ENCODE measurements at regions of chr1 and their contacts with region 1.

Region 1: GRCh38 chr1:114549137-114549536 is 32.3 kb downstream of the BCAS2 start:
- DNase-seq: peak in 2 of 3 donors; percentile 21 to 24
- H3K4me3 ChIP-seq: no peak overlapping the region
- H3K4me3 Mint-ChIP-seq: peak overlapping the region in 1 of 2 donors; percentile 49
- H3K27ac ChIP-seq: no peak overlapping the region
- H3K27ac Mint-ChIP-seq: peak overlapping the region; percentile 28 to 89 (median 75)
- H3K4me1 ChIP-seq: peaks cover 15 to 21% of the 10 kb centered on the region in 2 donors
- H3K4me1 Mint-ChIP-seq: peaks cover 15% of the 10 kb centered on the region
- H3K27me3 ChIP-seq: no peaks in the 10 kb centered on the region
- H3K27me3 Mint-ChIP-seq: peaks cover 0 to 7% (median 2%) of the 10 kb centered on the region in 3 donors
- CTCF ChIP-seq: no peak

Region 2: DNA sequence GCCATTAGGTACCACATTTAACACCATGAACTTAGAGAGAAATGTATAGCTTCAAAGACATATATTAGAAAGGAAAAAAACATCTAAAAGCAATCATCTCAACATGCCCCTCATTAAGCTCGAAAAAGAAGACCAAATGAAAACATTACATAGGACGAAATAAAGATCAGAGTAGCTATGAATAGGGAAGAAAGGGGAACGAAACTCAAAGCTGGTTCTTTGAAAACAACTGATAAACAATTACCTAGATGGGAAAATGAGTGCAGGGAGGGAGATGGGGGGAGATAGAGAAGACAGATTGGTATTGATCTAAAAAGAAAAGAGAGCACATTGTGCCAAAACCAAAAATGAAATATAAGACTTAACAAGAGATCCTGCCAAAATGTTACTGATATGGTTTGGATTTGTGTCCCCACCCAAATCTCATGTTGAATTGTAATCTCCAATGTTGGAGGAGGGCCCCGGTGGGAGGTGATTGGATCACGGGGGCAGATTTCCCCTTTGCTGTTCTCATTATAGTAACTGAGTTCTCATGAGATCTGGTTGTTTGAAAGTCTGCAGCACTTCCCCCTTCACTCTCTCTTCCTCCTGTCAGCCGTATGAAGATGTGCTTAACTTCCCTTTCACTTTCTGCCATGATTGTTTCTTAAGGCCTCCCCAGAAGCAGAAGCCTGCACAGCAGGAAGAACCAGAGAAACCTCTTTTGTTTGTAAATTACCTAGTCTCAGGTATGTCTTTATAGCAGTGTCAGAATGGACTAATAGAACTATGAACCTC is 66.7 kb before region 1 on chr1:
- intact Hi-C with region 1: loop called in 1 of 2 experiments (anchors 10 kb)
- DNase-seq: peak; percentile 69 to 74 (median 70)
- H3K4me3 ChIP-seq: peak overlapping the region in 2 of 3 experiments; percentile 5 to 22
- H3K4me3 Mint-ChIP-seq: peak overlapping the region; percentile 48 to 63
- H3K27ac ChIP-seq: peak overlapping the region; percentile 63 to 78
- H3K27ac Mint-ChIP-seq: peak overlapping the region; percentile 76 to 94 (median 85)
- H3K4me1 ChIP-seq: peaks cover 10 to 22% of the 10 kb centered on the region in 2 donors
- H3K4me1 Mint-ChIP-seq: peaks cover 20% of the 10 kb centered on the region
- H3K27me3 ChIP-seq: no peaks in the 10 kb centered on the region
- H3K27me3 Mint-ChIP-seq: no peaks in the 10 kb centered on the region
- CTCF ChIP-seq: no peak